AG04449 (cell line): ENCODE measurements at regions of chr3 and their contacts with region 1.

Region 1: DNA sequence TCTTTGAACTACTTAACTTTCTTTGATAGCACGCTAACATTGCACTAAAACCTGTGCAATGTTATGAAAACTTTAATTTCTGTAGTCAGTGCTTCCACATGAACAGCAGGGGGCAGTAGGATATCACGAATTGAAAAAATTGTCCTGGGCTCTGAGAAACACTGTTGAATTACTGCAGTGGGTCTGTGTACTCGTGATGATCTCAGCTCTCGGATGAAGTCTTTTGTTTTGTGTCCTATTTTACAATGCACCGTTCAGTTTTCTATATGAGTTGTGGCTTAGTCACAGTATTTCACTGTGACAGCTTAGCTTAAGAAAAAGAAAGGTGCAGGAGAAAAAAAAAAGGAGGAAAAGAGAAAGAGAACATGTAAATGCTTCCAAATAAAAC is 141.3 kb upstream of the CCDC54 start:
- DNase-seq: peak; percentile 34
- H3K4me3 ChIP-seq: peak overlapping the region; percentile 49
- CTCF ChIP-seq: peak; percentile 67

Region 2: DNA sequence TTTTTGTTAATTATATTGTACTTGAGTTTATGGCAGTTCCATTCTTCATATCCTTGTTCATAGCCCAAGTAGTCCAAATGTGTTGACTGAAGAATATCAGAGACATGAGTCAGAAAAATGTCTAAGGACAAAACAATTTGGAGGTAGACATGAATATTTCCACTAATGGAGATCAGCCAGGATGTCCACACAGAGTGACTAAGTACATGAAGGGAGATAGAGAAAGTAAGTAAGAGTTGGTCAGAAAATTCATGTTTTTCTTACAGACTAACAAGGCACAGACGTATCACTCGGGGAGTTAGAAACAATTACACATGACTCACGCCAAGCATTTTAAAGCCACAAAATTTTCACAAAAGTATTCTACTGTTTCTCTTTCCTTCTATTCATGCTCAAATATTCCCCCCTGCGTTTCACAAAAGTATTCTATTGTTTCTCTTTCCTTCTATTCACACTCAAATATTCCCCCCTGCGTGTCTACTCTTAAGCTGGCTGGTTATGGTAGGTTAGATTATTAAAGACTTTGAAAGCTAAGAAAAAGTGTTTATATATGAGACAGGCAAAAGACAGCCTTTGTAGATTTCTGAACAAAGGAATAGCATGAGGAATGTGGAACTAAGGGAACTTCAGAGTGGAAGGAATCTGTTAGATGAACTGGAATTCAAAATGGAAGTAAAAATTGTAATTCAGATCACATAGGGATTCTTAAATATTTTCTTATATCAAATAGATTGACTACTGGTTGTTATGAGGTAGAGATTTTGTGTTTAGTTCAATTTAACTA is 507.4 kb before region 1 on chr3:
- CTCF ChIA-PET with region 1: no interaction called
- POLR2A ChIA-PET with region 1: no interaction called
- DNase-seq: peak; percentile 96
- H3K4me3 ChIP-seq: no peak overlapping the region; the same call in 1 of the 2 replicates
- CTCF ChIP-seq: no peak

Region 3: DNA sequence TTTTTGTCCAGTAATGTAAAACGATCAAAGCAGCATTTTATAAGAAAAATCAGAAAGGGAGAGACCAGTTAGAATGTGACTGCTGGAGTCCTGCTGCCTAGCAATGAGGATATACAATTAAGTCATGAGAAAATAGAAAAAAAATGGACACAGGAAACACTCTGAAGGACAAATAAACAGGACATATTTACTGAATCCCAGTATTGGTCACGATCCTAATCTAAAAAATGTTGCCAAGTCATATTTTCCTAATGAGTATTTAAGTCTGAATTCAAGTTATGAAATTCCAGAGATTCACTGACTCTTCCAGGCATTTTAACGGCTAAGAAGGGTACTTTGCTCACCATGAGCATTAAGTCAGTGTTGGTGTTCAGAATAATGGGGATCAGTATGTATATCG is 13.0 kb before region 1 on chr3:
- CTCF ChIA-PET with region 1: interaction called, 27 read pairs
- POLR2A ChIA-PET with region 1: no interaction called
- DNase-seq: peak; percentile 73
- H3K4me3 ChIP-seq: no peak overlapping the region
- CTCF ChIP-seq: no peak

Region 4: DNA sequence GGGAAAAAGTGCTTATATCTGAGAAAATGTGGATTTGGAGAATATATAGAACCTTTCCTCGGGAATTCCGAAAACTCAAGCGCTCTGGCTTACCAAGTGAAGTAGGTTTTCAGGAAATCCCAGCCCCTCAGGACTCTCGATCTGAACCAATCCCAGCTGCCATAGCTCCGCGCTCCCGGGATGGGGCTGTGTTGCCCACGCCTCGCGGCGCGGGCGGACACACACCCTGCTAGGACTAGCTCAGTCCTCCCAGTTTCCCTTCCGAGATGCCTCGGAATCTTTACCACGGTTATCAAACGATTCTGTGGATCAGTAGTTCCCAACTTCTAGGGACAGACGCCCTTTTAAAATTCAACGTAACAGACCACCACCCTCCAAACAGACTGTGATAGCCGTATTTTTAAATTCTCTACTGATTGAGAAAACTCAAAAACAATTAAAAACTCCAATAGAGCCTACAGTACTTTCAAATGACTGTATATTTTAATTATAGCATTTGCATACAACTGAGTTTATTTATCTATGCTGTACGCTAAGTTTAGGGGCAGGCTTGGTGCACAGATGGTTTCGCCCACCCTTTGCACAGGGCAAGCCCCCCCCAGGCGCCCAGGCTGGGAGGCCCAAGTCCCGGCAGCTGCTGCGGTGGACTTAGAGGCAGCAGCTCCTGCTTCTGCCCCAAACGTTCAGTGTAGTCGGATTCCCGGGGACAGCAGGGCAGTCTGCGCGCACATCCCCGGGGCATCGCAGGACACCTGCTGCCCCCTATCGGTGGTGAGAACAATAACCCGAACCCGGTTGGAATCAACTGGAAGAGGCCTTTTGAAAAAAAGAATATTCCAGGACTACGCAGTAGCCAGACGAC is 193.6 kb after region 1 on chr3:
- CTCF ChIA-PET with region 1: interaction called, 54 read pairs
- POLR2A ChIA-PET with region 1: interaction called, 3 read pairs
- DNase-seq: peak; percentile 59
- H3K4me3 ChIP-seq: peak overlapping the region; percentile 56
- CTCF ChIP-seq: peak; percentile 84

Region 5: DNA sequence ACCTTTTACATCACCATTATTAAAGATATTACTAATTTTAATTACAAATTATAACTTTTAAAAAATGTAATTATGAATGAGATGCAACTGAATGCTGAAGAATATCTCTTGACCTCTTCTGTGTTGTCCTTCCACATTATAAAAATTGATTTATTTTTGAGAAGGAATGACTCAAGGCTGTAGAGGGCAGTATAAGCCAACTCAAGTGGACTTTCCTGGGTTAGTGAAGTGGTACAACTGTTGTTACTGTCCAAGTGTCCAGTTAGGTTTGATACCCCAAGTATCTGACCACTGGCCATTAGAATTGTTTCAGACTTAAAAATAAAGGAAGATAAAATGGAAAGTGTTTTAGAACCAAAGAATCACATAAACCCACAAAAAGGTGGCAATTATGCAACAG is 338.7 kb after region 1 on chr3:
- CTCF ChIA-PET with region 1: interaction called, 10 read pairs
- POLR2A ChIA-PET with region 1: no interaction called
- DNase-seq: no peak
- H3K4me3 ChIP-seq: no peak overlapping the region
- CTCF ChIP-seq: peak; percentile 35

Region 6: GRCh38 chr3:107740992-107741896 is 505.3 kb after region 1 on chr3:
- CTCF ChIA-PET with region 1: interaction called, 14 read pairs
- POLR2A ChIA-PET with region 1: no interaction called
- DNase-seq: no peak
- H3K4me3 ChIP-seq: no peak overlapping the region
- CTCF ChIP-seq: peak; percentile 13

Region 7: GRCh38 chr3:108552267-108553159 is 1316.6 kb after region 1 on chr3:
- CTCF ChIA-PET with region 1: interaction called, 11 read pairs
- POLR2A ChIA-PET with region 1: no interaction called
- DNase-seq: no peak
- H3K4me3 ChIP-seq: no peak overlapping the region
- CTCF ChIP-seq: no peak